ENCODE measurements at regions of chr2 and their contacts with region 1.

Region 1: GRCh38 chr2:121530212-121530705 is 421 bp upstream of the RNU4ATAC start:
- DNase-seq: peak; percentile 70
- ATAC-seq: peak; percentile 83
- H3K4me3 ChIP-seq: peak overlapping the region; percentile 79
- H3K27ac ChIP-seq: peak overlapping the region; percentile 94
- H3K4me1 ChIP-seq: peaks cover 6% of the 10 kb centered on the region
- H3K27me3 ChIP-seq: no peaks in the 10 kb centered on the region
- CTCF ChIP-seq: no peak
- POLR2A ChIP-seq: no peak
- RAD21 ChIP-seq: no peak

Region 2: DNA sequence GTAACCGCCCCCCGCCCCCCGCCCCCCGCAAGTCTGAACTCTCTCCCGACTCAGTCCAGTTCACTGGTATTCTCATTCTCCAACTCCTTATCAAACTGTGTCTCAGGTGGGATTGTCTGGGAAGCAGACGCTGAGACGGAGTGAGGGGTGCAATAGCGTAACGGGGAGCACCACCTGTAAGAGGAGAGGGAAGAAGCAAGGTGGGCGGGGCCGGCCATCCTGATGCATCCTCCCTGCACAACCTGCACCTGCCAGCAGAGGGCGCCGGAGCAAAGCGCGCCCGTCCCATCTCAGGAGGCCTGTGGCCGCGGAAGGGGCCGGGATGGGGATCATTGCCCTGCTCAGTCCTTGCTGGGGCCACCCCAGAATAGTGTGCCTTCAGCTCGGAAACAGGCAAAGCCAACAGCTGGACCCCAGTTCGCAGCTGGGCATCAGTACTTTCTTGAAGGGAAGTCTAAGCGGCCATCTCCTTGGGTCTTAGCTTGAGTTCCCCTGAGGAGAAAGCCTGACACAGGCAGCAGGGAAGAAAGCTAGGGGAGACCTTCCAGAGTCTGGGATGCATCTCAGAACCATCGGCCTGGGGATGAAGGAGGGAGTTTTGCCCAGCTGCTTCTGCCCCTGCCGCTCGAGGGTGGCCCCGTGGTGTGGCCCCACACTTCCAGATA is 453.2 kb before region 1 on chr2:
- CTCF ChIA-PET with region 1: no interaction called
- POLR2A ChIA-PET with region 1: no interaction called
- dilution Hi-C with region 1: no loop called
- in situ Hi-C with region 1: loop called (anchors 25 kb)
- intact Hi-C with region 1: no loop called
- DNase-seq: peak; percentile 28
- ATAC-seq: peak; percentile 59
- H3K4me3 ChIP-seq: no peak overlapping the region
- H3K27ac ChIP-seq: no peak overlapping the region
- H3K4me1 ChIP-seq: no peaks in the 10 kb centered on the region; the same call in 1 of the 2 replicates
- H3K27me3 ChIP-seq: peaks cover 17% of the 10 kb centered on the region; the same call in 1 of the 2 replicates
- CTCF ChIP-seq: peak; percentile 71
- POLR2A ChIP-seq: no peak
- RAD21 ChIP-seq: 0 out of 2 replicates have a peak, but pooled peaks have one; percentile 18

Region 3: DNA sequence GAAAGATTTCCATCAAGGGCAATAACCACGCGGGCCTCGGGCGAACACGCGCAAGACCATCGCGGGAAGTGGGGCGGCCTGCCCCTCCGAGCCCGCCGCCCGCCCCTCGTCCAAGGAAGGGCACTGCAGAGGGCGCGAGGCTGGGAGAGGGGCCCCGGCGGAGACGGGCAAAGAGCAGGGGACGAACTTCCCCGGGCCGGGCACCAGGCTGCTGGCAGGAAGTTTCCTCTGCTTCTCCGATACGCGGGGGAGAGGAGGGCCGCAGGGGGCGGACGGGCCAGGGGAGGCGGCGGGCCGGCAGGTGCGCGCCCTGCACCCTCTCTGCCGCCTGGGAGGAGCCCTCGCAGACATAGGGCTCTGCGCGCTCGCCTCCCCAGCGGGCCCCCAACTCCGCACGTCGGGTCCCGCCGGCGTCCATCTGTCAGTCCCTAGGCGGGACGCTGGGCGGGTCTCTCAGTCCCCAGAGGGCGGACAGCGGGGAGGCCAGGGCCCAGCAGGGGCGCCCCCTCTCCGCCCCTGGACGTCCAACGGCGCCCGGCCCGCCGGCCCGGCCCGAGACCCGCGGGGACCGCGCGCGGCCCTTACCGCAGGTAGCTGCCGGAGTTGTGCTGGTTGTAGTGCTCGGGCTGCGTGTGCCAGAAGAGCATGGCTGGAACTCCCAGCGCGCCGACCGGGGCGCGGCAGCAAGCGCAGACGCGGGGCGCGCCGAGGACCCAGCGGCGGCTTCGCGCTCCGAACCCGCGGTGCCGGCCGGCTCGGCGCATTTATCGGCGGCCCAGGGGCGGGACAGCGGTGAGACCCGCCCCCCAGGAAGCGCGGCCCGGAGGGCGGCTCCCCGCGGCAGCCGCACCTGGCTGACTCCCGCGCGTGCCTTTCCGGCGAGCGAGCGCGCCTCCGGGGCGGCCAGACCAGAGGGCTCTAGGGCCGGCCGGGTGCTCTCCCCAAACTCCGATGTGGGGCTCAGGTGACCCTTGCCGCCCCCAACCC is 245.5 kb before region 1 on chr2 and contains the start of gene TFCP2L1:
- CTCF ChIA-PET with region 1: no interaction called
- POLR2A ChIA-PET with region 1: no interaction called
- dilution Hi-C with region 1: no loop called
- in situ Hi-C with region 1: no loop called
- intact Hi-C with region 1: no loop called
- DNase-seq: no peak
- ATAC-seq: peak; percentile 21; the same call in 1 of the 2 replicates
- H3K4me3 ChIP-seq: no peak within 1 kb of the TSS
- H3K27ac ChIP-seq: no peak within 1 kb of the TSS
- H3K4me1 ChIP-seq: no peaks in the 10 kb centered on the region
- H3K27me3 ChIP-seq: peaks cover 63% of the 10 kb centered on the region
- CTCF ChIP-seq: no peak
- POLR2A ChIP-seq: no peak
- RAD21 ChIP-seq: no peak
- total RNA-seq, gene TFCP2L1: not detected in 2 replicates

Region 4: GRCh38 chr2:121418494-121419058 is 111.7 kb before region 1 on chr2:
- CTCF ChIA-PET with region 1: no interaction called
- POLR2A ChIA-PET with region 1: no interaction called
- dilution Hi-C with region 1: no loop called
- in situ Hi-C with region 1: loop called (anchors 10 kb)
- intact Hi-C with region 1: no loop called
- DNase-seq: no peak
- ATAC-seq: no peak
- H3K4me3 ChIP-seq: no peak overlapping the region
- H3K27ac ChIP-seq: no peak overlapping the region
- H3K4me1 ChIP-seq: no peaks in the 10 kb centered on the region
- H3K27me3 ChIP-seq: no peaks in the 10 kb centered on the region
- CTCF ChIP-seq: no peak
- POLR2A ChIP-seq: no peak
- RAD21 ChIP-seq: no peak

Region 5: DNA sequence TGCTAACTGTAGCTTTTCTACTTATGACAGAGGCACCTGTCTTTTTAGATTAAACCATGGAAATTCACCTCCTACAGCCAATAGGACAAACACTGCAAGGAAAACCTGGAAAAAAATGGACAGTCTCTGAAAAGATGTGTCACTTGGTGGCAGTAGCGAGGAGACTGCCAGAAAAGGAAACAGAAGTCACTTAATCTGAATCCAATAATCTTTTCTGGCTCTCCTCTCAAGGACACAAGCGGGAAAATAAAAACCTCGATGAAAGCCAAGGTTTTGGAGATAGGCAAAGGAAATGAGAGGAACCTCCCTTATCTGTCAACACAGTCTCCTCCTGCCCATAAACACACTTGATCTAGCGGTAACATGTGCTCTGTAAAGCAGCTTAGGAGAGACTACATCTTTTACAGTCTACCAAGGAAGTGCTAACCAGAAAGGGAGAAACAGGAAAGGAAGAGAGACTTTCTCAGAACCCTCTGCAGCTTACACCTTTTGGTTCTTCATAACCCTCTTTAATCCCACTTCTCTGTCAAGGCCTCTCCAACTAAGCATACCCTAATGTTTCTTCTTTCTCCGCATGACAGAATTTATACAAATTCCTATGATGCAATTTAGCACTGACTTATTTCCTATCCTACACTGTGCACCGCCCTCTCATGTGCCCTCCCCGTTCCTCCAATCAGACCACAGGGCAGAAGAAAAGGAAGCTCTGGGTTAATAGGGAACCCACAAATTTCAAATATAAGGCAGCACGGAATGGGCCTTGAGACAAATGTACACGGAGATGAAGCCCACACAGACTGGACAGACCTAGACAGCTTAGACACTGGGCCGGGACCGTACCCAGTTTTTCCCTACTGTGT is 66.2 kb after region 1 on chr2:
- CTCF ChIA-PET with region 1: interaction called, 5 read pairs
- POLR2A ChIA-PET with region 1: no interaction called
- dilution Hi-C with region 1: no loop called
- in situ Hi-C with region 1: no loop called
- intact Hi-C with region 1: loop called (anchors 5 kb)
- DNase-seq: peak; percentile 57
- ATAC-seq: peak; percentile 90
- H3K4me3 ChIP-seq: peak overlapping the region; percentile 9; the same call in 1 of the 2 replicates
- H3K27ac ChIP-seq: peak overlapping the region; percentile 33; the same call in 1 of the 2 replicates
- H3K4me1 ChIP-seq: peaks cover 7% of the 10 kb centered on the region
- H3K27me3 ChIP-seq: no peaks in the 10 kb centered on the region
- CTCF ChIP-seq: peak; percentile 50
- POLR2A ChIP-seq: no peak
- RAD21 ChIP-seq: peak; percentile 54

Region 6: DNA sequence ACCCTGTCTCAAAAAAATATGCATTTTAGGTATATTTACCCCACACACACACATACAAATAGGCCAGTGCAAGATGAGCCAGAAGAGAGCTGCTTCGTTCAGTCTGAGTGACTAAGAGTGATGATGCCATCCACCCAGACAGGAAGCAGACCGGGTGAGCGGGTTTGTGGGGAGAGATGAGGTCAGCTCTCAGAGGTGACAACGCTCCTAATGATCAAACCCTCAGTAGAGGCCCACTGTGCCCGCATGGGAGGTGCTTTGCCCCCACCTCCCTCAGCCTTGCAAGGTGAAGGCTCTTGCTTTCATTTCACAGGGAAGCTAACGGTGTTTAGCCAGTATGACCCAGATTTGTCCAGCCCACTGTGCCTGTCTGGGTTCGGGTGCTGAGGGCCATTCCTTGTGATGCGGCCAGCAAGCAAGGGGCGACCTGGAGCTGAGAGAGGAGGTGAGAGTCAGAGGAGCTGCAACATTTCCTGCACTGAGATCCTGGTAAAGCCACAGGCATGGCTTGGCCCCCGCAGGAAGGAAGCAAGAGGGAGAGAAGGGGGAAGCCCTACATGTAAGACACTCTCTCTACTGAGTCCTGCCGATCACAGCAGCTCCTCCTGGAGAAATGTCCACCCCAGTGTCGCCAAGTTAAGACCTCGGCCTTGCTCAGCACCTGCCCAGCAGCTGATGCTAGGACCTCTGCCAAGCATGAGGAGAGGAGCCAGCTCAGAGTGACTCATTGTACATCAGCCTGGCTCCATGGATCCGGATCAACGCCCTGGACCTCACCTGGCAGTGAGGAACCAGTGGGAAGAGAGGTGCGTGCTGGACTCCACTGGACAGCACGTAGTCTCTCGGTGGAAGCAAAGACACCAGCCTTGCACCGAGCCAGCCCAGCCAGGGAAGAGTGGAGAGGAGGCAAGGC is 169.4 kb after region 1 on chr2:
- CTCF ChIA-PET with region 1: no interaction called
- POLR2A ChIA-PET with region 1: no interaction called
- dilution Hi-C with region 1: no loop called
- in situ Hi-C with region 1: no loop called
- intact Hi-C with region 1: no loop called
- DNase-seq: peak; percentile 84
- ATAC-seq: peak; percentile 89
- H3K4me3 ChIP-seq: no peak overlapping the region
- H3K27ac ChIP-seq: no peak overlapping the region
- H3K4me1 ChIP-seq: peaks cover 10% of the 10 kb centered on the region
- H3K27me3 ChIP-seq: no peaks in the 10 kb centered on the region
- CTCF ChIP-seq: no peak
- POLR2A ChIP-seq: no peak
- RAD21 ChIP-seq: no peak

Region 7: GRCh38 chr2:121716126-121716525 is 185.9 kb after region 1 on chr2:
- CTCF ChIA-PET with region 1: interaction called, 5 read pairs
- POLR2A ChIA-PET with region 1: interaction called, 12 read pairs
- dilution Hi-C with region 1: no loop called
- in situ Hi-C with region 1: loop called (anchors 10 kb)
- intact Hi-C with region 1: loop called (anchors 1 kb)
- DNase-seq: no peak
- ATAC-seq: no peak
- H3K4me3 ChIP-seq: no peak overlapping the region
- H3K27ac ChIP-seq: no peak overlapping the region
- H3K4me1 ChIP-seq: peaks cover under 1% of the 10 kb centered on the region; the same call in 1 of the 2 replicates
- H3K27me3 ChIP-seq: no peaks in the 10 kb centered on the region
- CTCF ChIP-seq: no peak
- POLR2A ChIP-seq: no peak
- RAD21 ChIP-seq: no peak

Region 8: GRCh38 chr2:121736462-121737341 is 206.4 kb after region 1 on chr2 and contains the start of gene NIFK:
- CTCF ChIA-PET with region 1: no interaction called
- POLR2A ChIA-PET with region 1: no interaction called
- dilution Hi-C with region 1: no loop called
- in situ Hi-C with region 1: no loop called
- intact Hi-C with region 1: loop called (anchors 1 kb)
- DNase-seq: peak; percentile 95
- ATAC-seq: peak; percentile 98
- H3K4me3 ChIP-seq: peak within 1 kb of the TSS; percentile 79
- H3K27ac ChIP-seq: peak within 1 kb of the TSS; percentile 99
- H3K4me1 ChIP-seq: no peaks in the 10 kb centered on the region
- H3K27me3 ChIP-seq: peaks cover under 1% of the 10 kb centered on the region; the same call in 1 of the 2 replicates
- CTCF ChIP-seq: no peak
- POLR2A ChIP-seq: peak; percentile 62; the same call in 1 of the 2 replicates
- RAD21 ChIP-seq: no peak
- total RNA-seq, gene NIFK: 19.5 and 47.8 TPM in 2 replicates

Measured in IMR-90 (cell line).